B cell (primary cell): ENCODE measurements at regions of chr11 and their contacts with region 1.

Region 1: GRCh38 chr11:95150946-95151684 is 61.5 kb downstream of the ENDOD1 start:
- DNase-seq: peak; percentile 96
- ATAC-seq: peak; percentile 90
- H3K4me3 ChIP-seq: peak overlapping the region; percentile 52 to 91 (median 82)
- H3K4me3 Mint-ChIP-seq: peak overlapping the region; percentile 95
- H3K27ac ChIP-seq: peak overlapping the region; percentile 88 to 91
- H3K27ac Mint-ChIP-seq: peak overlapping the region; percentile 96
- H3K4me1 ChIP-seq: peaks cover 28 to 43% of the 10 kb centered on the region in 2 donors
- H3K4me1 Mint-ChIP-seq: peaks cover 46% of the 10 kb centered on the region
- H3K27me3 ChIP-seq: no peaks in the 10 kb centered on the region
- H3K27me3 Mint-ChIP-seq: no peaks in the 10 kb centered on the region
- CTCF ChIP-seq: peak; percentile 86

Region 2: GRCh38 chr11:94876645-94877442 is 274.3 kb before region 1 on chr11:
- CTCF ChIA-PET with region 1: no interaction called
- POLR2A ChIA-PET with region 1: no interaction called
- intact Hi-C with region 1: no loop called
- DNase-seq: no peak
- ATAC-seq: peak; percentile 58
- H3K4me3 ChIP-seq: no peak overlapping the region
- H3K4me3 Mint-ChIP-seq: peak overlapping the region; percentile 10
- H3K27ac ChIP-seq: no peak overlapping the region
- H3K27ac Mint-ChIP-seq: no peak overlapping the region
- H3K4me1 ChIP-seq: peaks cover 6 to 10% of the 10 kb centered on the region in 2 donors
- H3K4me1 Mint-ChIP-seq: peaks cover 12% of the 10 kb centered on the region
- H3K27me3 ChIP-seq: no peaks in the 10 kb centered on the region
- H3K27me3 Mint-ChIP-seq: peaks cover 7% of the 10 kb centered on the region
- CTCF ChIP-seq: no peak

Region 3: DNA sequence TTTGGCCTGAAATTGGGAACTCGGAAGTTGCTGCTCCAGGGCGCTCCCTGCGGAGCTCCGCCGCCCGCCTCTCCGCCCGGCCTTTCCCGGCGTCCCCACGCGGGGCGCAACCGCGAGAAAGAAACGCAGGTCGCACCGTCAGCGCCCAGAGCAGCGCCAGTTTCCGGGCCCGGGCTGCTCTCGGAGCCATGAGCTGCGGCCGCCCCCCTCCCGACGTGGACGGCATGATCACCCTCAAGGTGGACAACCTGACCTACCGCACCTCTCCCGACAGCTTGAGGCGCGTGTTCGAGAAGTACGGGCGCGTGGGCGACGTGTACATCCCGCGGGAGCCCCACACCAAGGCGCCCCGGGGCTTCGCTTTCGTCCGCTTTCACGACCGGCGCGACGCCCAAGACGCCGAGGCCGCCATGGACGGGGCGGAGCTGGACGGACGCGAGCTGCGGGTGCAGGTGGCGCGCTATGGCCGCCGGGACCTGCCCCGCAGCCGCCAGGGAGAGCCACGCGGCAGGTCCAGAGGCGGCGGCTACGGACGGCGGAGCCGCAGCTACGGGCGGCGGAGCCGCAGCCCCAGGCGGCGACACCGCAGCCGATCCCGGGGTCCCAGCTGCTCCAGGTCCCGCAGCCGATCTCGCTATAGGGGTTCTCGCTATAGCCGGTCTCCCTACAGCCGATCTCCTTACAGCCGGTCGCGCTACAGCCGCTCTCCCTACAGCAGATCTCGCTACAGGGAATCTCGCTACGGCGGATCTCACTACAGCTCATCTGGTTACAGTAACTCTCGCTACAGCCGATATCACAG is 83.9 kb before region 1 on chr11:
- CTCF ChIA-PET with region 1: interaction called, 106 read pairs
- POLR2A ChIA-PET with region 1: interaction called, 18 read pairs
- intact Hi-C with region 1: loop called (anchors 1 kb)
- DNase-seq: peak; percentile 88
- ATAC-seq: peak; percentile 78
- H3K4me3 ChIP-seq: peak overlapping the region; percentile 70 to 95 (median 93)
- H3K4me3 Mint-ChIP-seq: peak overlapping the region; percentile 100
- H3K27ac ChIP-seq: peak overlapping the region; percentile 78 to 87
- H3K27ac Mint-ChIP-seq: peak overlapping the region; percentile 100
- H3K4me1 ChIP-seq: peaks cover 14 to 22% of the 10 kb centered on the region in 2 donors
- H3K4me1 Mint-ChIP-seq: peaks cover 26% of the 10 kb centered on the region
- H3K27me3 ChIP-seq: no peaks in the 10 kb centered on the region
- H3K27me3 Mint-ChIP-seq: no peaks in the 10 kb centered on the region
- CTCF ChIP-seq: peak; percentile 52

Region 4: DNA sequence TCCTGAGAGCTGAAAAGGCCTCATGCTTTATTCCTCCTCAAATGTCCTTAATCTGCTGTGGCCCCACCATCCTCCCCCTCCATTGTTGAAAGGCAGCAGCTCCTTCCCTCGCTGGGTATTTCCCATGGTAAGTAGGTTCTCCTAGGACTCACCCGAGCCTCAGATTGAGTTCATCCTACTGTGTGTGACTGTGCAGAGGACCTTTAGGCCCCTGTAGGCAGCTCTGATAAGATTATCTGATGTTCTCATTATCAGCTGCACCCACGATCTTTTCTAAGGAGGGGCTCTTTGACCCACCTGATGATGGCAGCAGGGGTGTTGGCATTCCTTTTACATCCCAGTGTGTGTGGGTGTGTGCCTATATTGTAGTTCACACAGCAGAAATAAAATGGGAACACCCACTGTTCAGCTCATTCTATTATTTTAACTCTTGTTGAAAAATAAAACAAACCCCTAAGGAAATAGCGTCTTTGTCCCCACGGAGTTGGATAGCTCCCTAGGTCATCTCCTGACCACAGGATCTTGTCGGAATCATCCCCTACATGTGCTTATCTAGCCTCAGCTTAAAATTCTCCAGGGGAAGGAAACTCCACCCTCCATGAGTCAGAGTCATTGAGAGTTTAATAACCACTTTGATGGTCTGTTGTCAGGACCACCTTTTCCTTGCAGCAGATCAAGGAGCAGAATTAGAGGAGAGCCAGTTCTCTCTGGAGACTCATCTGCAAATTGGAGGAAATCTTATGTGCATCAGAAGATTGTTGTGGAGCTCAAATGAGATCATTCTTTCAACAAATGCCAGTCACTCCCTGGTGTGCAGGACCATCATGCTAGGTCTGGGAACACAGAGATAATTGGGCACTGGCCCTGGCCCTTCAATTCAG is 42.2 kb before region 1 on chr11:
- CTCF ChIA-PET with region 1: no interaction called
- POLR2A ChIA-PET with region 1: no interaction called
- intact Hi-C with region 1: no loop called
- DNase-seq: no peak
- ATAC-seq: no peak
- H3K4me3 ChIP-seq: peak overlapping the region in 3 of 5 experiments; percentile 18 to 37 (median 22)
- H3K4me3 Mint-ChIP-seq: peak overlapping the region; percentile 80
- H3K27ac ChIP-seq: peak overlapping the region; percentile 62 to 73
- H3K27ac Mint-ChIP-seq: peak overlapping the region; percentile 90
- H3K4me1 ChIP-seq: peaks cover 30 to 36% of the 10 kb centered on the region in 2 donors
- H3K4me1 Mint-ChIP-seq: peaks cover 60% of the 10 kb centered on the region
- H3K27me3 ChIP-seq: no peaks in the 10 kb centered on the region
- H3K27me3 Mint-ChIP-seq: no peaks in the 10 kb centered on the region
- CTCF ChIP-seq: no peak

Region 5: GRCh38 chr11:95165638-95166037 is 14.5 kb after region 1 on chr11:
- CTCF ChIA-PET with region 1: interaction called, 13 read pairs
- POLR2A ChIA-PET with region 1: interaction called, 6 read pairs
- intact Hi-C with region 1: loop called (anchors 2 kb)
- DNase-seq: no peak
- ATAC-seq: no peak
- H3K4me3 ChIP-seq: no peak overlapping the region
- H3K4me3 Mint-ChIP-seq: no peak overlapping the region
- H3K27ac ChIP-seq: no peak overlapping the region
- H3K27ac Mint-ChIP-seq: no peak overlapping the region
- H3K4me1 ChIP-seq: peaks cover 0 to 3% of the 10 kb centered on the region in 2 donors
- H3K4me1 Mint-ChIP-seq: peaks cover 30% of the 10 kb centered on the region
- H3K27me3 ChIP-seq: no peaks in the 10 kb centered on the region
- H3K27me3 Mint-ChIP-seq: no peaks in the 10 kb centered on the region
- CTCF ChIP-seq: no peak

Region 6: GRCh38 chr11:95715777-95716241 is 564.7 kb after region 1 on chr11:
- CTCF ChIA-PET with region 1: interaction called, 117 read pairs
- POLR2A ChIA-PET with region 1: interaction called, 8 read pairs
- intact Hi-C with region 1: loop called (anchors 1 kb)
- DNase-seq: peak; percentile 94
- ATAC-seq: peak; percentile 80
- H3K4me3 ChIP-seq: peak overlapping the region in 4 of 5 experiments; percentile 16 to 55 (median 28)
- H3K4me3 Mint-ChIP-seq: peak overlapping the region; percentile 68
- H3K27ac ChIP-seq: peak overlapping the region; percentile 94 to 98
- H3K27ac Mint-ChIP-seq: peak overlapping the region; percentile 92
- H3K4me1 ChIP-seq: peaks cover 80 to 84% of the 10 kb centered on the region in 2 donors
- H3K4me1 Mint-ChIP-seq: peaks cover 85% of the 10 kb centered on the region
- H3K27me3 ChIP-seq: no peaks in the 10 kb centered on the region
- H3K27me3 Mint-ChIP-seq: no peaks in the 10 kb centered on the region
- CTCF ChIP-seq: no peak

Region 7: DNA sequence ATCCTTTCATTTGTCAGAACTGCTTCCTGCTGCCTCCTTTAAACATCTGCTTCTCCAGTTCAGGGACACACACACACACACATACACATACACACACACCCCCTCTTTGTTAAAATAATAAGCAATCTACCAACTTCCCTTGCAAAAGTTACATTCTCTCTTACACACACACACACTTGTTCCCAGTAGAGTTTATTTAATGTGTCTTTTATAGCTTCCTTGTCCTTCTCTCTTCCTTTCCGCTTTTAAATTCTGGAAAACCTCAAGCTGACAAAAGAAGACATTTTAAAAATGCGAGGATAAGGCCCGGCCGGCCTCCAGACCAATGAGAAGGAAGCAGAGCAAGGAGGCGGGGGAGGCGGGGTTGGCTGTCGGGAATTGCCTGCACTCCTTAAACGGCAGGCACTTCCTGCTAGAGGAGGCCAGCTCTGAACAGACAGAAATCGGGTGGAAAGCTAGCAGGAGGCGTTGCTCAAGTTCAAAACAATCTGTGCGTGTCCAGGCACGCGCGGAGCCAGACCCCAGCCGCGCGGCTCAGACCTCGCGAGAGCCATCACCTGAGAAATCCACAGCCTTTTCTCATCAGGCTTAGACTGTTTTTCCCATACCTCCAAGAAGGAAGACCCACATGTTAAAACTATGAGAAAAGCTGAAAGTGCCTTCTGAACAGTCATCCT is 1092.0 kb after region 1 on chr11:
- CTCF ChIA-PET with region 1: no interaction called
- POLR2A ChIA-PET with region 1: no interaction called
- intact Hi-C with region 1: loop called (anchors 10 kb)
- DNase-seq: peak; percentile 82
- ATAC-seq: peak; percentile 81
- H3K4me3 ChIP-seq: peak overlapping the region; percentile 50 to 77 (median 62)
- H3K4me3 Mint-ChIP-seq: peak overlapping the region; percentile 93
- H3K27ac ChIP-seq: peak overlapping the region; percentile 72 to 84
- H3K27ac Mint-ChIP-seq: peak overlapping the region; percentile 96
- H3K4me1 ChIP-seq: peaks cover 36 to 37% of the 10 kb centered on the region in 2 donors
- H3K4me1 Mint-ChIP-seq: peaks cover 49% of the 10 kb centered on the region
- H3K27me3 ChIP-seq: no peaks in the 10 kb centered on the region
- H3K27me3 Mint-ChIP-seq: no peaks in the 10 kb centered on the region
- CTCF ChIP-seq: no peak